CD4-positive, alpha-beta memory T cell (primary cell): ENCODE measurements at regions of chr1 and their contacts with region 1.

Region 1: DNA sequence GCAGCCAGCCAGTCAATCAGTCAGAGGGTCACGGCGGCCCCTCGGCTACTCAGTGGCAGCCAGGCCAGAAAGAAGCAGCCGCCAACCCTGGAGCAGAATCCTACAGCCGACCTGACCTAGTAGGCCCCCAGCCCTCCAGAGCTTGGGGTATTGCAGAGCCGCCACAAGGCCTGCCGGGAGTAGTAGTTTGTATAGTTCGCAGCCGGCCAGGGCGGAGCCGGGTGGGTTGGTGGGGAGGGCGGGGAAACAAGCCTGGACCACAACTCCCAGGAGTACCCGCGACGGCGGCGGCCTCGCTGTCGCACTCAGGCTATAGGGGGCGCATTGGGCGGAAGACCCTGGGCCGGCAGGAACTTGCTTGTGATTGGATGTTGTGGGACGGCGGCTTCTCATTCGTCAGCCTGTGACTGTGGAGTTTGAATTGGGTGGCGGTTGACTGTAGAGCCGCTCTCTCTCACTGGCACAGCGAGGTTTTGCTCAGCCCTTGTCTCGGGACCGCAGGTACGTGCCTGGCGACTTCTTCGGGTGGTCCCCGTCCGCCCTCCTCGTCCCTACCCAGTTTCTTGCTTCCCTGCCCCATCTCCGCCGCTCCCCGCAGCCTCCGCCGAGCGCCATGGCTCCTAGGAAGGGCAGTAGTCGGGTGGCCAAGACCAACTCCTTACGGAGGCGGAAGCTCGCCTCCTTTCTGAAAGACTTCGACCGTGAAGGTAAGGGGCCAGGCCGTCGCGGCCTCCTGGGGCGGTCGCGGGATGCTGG is at the start of gene CDCA8:
- DNase-seq: peak; percentile 98
- H3K4me3 ChIP-seq: peak within 1 kb of the TSS; percentile 85 to 86
- H3K4me3 Mint-ChIP-seq: peak within 1 kb of the TSS; percentile 92 to 97 (median 96)
- H3K27ac ChIP-seq: peak within 1 kb of the TSS; percentile 67
- H3K27ac Mint-ChIP-seq: peak within 1 kb of the TSS; percentile 87 to 97 (median 95)
- H3K4me1 ChIP-seq: peaks cover 32% of the 10 kb centered on the region
- H3K4me1 Mint-ChIP-seq: peaks cover 21 to 45% (median 35%) of the 10 kb centered on the region in 4 donors
- H3K27me3 ChIP-seq: no peaks in the 10 kb centered on the region
- H3K27me3 Mint-ChIP-seq: no peaks in the 10 kb centered on the region
- total RNA-seq, gene CDCA8: 0.61 to 1.3 TPM

Region 2: GRCh38 chr1:36463803-36464604 is 1228.3 kb before region 1 on chr1 and contains the start of gene MRPS15:
- CTCF ChIA-PET with region 1: no interaction called
- POLR2A ChIA-PET with region 1: no interaction called
- intact Hi-C with region 1: loop called (anchors 5 kb)
- DNase-seq: peak; percentile 91 to 95 (median 92)
- H3K4me3 ChIP-seq: peak within 1 kb of the TSS; percentile 83 to 87
- H3K4me3 Mint-ChIP-seq: peak within 1 kb of the TSS; percentile 96 to 99 (median 98)
- H3K27ac ChIP-seq: peak within 1 kb of the TSS; percentile 80
- H3K27ac Mint-ChIP-seq: peak within 1 kb of the TSS; percentile 95 to 98 (median 97)
- H3K4me1 ChIP-seq: peaks cover 23% of the 10 kb centered on the region
- H3K4me1 Mint-ChIP-seq: peaks cover 19 to 50% (median 31%) of the 10 kb centered on the region in 4 donors
- H3K27me3 ChIP-seq: no peaks in the 10 kb centered on the region
- H3K27me3 Mint-ChIP-seq: no peaks in the 10 kb centered on the region
- total RNA-seq, gene MRPS15: 32.5 to 33.9 TPM

Region 3: DNA sequence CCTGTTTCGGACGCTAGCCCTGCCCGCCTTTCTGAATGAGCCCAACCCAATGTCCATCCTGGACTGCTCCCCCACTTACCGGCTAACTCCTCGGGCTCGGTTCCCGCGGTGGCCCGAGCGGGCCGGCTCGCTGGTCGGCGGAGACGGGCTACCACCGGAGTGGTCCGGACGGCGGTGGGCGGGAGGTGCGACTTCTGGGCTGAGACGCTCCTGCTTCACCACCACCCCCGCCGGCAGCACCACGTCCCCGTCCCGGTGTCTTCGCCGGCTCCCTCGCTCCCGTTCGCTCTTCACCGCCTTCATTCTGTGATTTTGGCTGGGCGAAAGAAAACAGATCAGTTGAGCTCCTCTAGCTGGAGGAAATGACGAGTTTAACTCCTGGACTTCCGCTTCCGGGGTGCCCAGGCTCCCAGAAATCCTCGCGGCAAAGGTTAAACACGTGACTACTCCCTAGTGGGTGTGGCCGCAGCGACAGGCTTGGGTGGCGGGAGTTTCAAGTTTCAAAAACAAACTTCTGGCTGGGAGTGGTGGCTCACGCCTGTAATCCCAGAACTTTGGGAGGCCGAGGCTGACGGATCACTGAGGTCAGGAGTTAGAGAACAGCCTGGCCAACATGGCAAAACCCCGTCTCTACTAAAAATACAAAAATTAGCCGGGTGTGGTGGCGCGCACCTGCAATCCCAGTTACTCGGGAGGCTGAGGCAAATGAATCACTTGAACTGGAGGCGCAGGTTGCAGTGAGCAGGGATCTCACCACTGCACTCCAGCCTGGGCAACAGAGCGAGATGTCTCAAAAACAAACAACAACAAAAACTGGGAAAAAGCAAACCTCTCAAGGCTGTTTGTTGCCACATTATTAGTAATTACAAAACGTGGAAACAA is 138.1 kb before region 1 on chr1 and contains the start of gene SNIP1:
- CTCF ChIA-PET with region 1: interaction called, 4 read pairs
- POLR2A ChIA-PET with region 1: interaction called, 5 read pairs
- intact Hi-C with region 1: loop called (anchors 1 kb)
- DNase-seq: peak; percentile 90 to 96 (median 92)
- H3K4me3 ChIP-seq: peak within 1 kb of the TSS; percentile 96 to 99
- H3K4me3 Mint-ChIP-seq: peak within 1 kb of the TSS; percentile 95 to 100 (median 98)
- H3K27ac ChIP-seq: peak within 1 kb of the TSS; percentile 96
- H3K27ac Mint-ChIP-seq: peak within 1 kb of the TSS; percentile 81 to 100 (median 98)
- H3K4me1 ChIP-seq: peaks cover 30% of the 10 kb centered on the region
- H3K4me1 Mint-ChIP-seq: peaks cover 26 to 49% (median 36%) of the 10 kb centered on the region in 4 donors
- H3K27me3 ChIP-seq: no peaks in the 10 kb centered on the region
- H3K27me3 Mint-ChIP-seq: no peaks in the 10 kb centered on the region
- total RNA-seq, gene SNIP1: 29.8 to 30.2 TPM

Region 4: DNA sequence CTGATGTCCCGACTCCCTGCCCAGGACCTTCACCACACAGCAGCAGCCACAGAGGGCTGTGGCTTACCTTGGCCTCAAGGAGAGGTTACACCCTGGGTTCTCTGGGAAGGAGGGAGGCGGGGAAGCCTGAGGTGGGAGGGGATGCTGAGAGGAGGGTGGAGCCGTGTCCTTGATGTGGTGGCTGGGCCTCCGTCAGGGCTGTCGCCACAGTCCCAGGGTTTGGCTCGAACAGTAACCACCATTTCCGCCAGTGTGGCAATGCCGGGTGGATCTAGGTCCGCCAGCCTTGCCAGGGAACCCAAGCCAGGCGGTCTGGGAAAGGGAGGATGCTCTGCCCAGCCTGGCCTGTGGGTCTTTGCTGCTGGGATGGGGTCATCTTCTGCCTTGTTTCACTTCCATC is 18.3 kb before region 1 on chr1:
- CTCF ChIA-PET with region 1: interaction called, 34 read pairs
- POLR2A ChIA-PET with region 1: interaction called, 3 read pairs
- intact Hi-C with region 1: loop called (anchors 1 kb)
- DNase-seq: peak; percentile 83 to 89 (median 85)
- H3K4me3 ChIP-seq: peak overlapping the region in 1 of 2 donors; percentile 29
- H3K4me3 Mint-ChIP-seq: peak overlapping the region in 7 of 8 donors; percentile 65 to 86 (median 79)
- H3K27ac ChIP-seq: no peak overlapping the region
- H3K27ac Mint-ChIP-seq: peak overlapping the region; percentile 29 to 95 (median 81)
- H3K4me1 ChIP-seq: peaks cover 26% of the 10 kb centered on the region
- H3K4me1 Mint-ChIP-seq: peaks cover 5 to 35% (median 26%) of the 10 kb centered on the region in 4 donors
- H3K27me3 ChIP-seq: no peaks in the 10 kb centered on the region
- H3K27me3 Mint-ChIP-seq: peaks cover 1 to 4% of the 10 kb centered on the region in 2 donors

Region 5: GRCh38 chr1:37931361-37932158 is 239.3 kb after region 1 on chr1:
- CTCF ChIA-PET with region 1: no interaction called
- POLR2A ChIA-PET with region 1: no interaction called
- intact Hi-C with region 1: loop called (anchors 1 kb)
- DNase-seq: peak; percentile 95 to 97 (median 97)
- H3K4me3 ChIP-seq: peak overlapping the region; percentile 58 to 71
- H3K4me3 Mint-ChIP-seq: peak overlapping the region; percentile 93 to 99 (median 96)
- H3K27ac ChIP-seq: peak overlapping the region; percentile 70
- H3K27ac Mint-ChIP-seq: peak overlapping the region; percentile 69 to 95 (median 91)
- H3K4me1 ChIP-seq: peaks cover 34% of the 10 kb centered on the region
- H3K4me1 Mint-ChIP-seq: peaks cover 21 to 45% (median 32%) of the 10 kb centered on the region in 4 donors
- H3K27me3 ChIP-seq: no peaks in the 10 kb centered on the region
- H3K27me3 Mint-ChIP-seq: no peaks in the 10 kb centered on the region